ENCODE measurements at regions of chr7 and their contacts with region 1.

Region 1: DNA sequence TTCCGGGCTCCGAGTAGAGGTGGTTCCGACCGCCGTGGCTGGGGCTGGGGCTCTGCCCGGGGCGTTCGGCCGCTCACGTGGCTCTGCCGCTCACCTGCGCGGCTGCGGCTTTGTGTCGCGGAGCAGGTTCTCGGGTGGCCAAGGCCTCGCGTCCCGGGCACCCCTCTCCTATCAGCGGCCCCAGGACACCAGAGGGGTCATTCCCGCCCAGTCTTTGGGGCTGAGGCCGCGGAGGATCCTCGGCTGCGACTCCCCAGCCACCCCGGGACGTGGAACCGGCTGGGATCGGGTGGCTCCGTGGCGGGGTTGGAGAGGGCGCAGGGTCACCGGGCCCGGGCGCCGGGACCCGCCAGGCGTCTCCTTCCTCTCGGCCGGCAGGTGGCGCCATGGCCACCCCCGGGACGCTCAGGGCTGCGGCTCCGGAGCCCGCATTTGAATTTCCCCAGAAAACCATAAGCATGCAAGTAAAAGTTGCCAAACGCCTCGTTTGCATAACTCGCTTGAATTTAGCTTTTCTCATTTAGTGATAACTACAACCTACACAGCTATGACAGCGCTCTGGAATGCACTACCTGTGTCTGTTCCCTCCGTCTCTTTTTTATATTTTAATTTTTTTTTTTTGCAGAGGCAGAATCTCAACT is 1.2 kb downstream of the COL26A1 start:
- DNase-seq: peak; percentile 18 to 52 (median 25)
- H3K4me3 ChIP-seq: peak overlapping the region in 2 of 3 experiments; percentile 2 to 59
- H3K4me3 Mint-ChIP-seq: peak overlapping the region in 1 of 2 donors; percentile 30
- H3K27ac ChIP-seq: no peak overlapping the region
- H3K27ac Mint-ChIP-seq: no peak overlapping the region
- H3K4me1 ChIP-seq: peaks cover 5 to 8% of the 10 kb centered on the region in 2 donors
- H3K4me1 Mint-ChIP-seq: peaks cover 5% of the 10 kb centered on the region
- H3K27me3 ChIP-seq: peaks cover 23 to 33% of the 10 kb centered on the region in 2 donors
- H3K27me3 Mint-ChIP-seq: peaks cover 30 to 68% (median 44%) of the 10 kb centered on the region in 3 donors
- CTCF ChIP-seq: peak; percentile 89

Region 2: DNA sequence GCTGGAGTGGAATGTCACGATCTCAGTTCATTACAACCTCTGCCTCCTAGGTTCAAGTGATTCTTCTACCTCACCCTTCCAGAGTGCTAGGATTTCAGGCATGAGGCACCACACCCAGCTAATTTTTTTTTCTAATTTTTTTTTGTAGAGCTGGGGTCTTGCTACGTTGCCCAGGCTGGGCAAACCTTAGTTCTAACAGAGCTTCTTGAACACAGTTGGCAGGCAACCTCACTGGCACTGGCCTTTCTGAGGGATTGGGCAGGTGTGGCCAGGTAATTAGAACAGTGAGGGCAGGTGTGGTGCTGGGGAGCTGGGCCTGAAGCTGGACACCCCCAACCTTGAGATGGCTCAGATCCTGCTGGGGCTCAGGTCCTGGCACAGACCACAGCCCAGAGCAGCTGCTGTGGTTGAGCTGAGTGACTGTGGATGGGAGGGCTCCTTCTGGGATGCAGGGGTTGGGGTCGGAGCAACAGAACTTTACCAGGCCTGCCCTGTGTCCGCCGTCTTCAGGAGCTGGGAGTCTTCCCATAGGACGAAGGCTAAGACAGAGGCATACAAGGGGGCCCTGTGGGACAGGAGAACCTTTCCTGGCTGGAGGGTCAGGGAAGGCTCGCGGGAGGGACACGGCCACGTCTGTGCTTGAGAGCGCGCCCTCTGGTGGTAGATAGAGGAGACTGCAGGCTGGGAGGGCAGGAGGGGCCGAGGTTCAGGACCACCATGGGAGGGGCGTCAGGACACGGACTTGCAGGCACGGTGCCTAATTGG is 47.1 kb after region 1 on chr7:
- intact Hi-C with region 1: loop called in 1 of 2 experiments (anchors 5 kb)
- DNase-seq: peak in 1 of 3 donors; percentile 22
- H3K4me3 ChIP-seq: no peak overlapping the region
- H3K4me3 Mint-ChIP-seq: no peak overlapping the region
- H3K27ac ChIP-seq: no peak overlapping the region
- H3K27ac Mint-ChIP-seq: peak overlapping the region in 5 of 7 donors; percentile 0 to 84 (median 40)
- H3K4me1 ChIP-seq: peaks cover 6 to 9% of the 10 kb centered on the region in 2 donors
- H3K4me1 Mint-ChIP-seq: peaks cover 11% of the 10 kb centered on the region
- H3K27me3 ChIP-seq: no peaks in the 10 kb centered on the region
- H3K27me3 Mint-ChIP-seq: peaks cover 5 to 11% (median 8%) of the 10 kb centered on the region in 3 donors
- CTCF ChIP-seq: peak; percentile 77